ENCODE measurements at regions of chr18 and their contacts with region 1.

Region 1: DNA sequence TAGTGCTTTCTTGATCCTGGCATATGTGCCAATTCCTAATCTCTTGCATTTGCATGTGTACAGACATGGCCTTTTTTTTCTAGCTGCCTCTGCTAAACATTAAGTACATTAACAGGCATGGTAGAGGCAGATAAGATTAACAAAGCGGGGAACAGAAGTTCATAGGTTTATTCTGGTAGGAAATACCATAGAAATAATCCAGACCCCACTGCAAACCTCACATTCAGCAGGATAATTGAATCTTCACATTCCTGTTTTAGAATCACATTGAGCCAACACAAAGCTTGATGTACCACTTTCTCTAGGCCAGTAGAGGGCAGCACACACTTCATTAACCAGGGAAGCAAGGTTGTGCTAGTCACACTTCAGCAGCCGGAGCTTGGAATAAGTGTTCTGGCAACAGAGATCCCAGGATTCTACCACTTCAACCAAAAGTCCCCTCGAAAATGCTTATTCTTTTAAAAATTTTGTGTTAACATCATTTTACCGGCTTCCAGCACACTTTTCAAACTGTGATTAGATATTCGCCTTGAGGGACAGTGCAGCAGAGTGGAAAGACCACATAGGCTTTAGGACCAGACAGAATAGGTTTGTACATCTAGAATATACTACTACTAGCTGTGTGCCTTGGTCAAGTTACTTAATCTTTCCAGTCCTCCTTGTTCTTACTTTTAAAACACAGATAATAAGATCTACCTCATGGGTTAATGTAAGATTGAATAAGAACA is 420.2 kb upstream of the CHST9 start:
- DNase-seq: peak; percentile 57
- H3K4me3 ChIP-seq: no peak overlapping the region
- H3K27ac ChIP-seq: no peak overlapping the region
- H3K4me1 ChIP-seq: no peaks in the 10 kb centered on the region
- CTCF ChIP-seq: peak; percentile 89

Region 2: DNA sequence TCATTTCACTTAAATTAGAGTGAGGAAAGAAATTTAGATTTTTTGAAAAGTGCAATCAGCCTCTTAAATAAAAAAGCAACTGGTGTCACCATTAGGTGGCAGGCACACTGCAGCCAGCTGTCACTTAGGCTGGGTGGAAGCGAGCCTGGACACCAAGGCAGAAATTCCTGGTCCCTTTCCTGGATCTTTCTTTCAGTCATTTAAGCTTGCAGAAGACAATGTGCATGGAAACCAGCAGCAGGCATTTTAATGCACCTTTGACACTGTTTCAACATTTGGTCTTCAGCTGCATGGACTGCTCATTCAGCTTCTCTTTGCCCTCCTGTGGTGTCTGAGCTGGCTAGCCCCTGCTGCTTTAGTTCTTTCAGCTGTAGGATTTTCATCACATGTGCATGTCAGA is 800.8 kb before region 1 on chr18:
- CTCF ChIA-PET with region 1: no interaction called
- POLR2A ChIA-PET with region 1: no interaction called
- intact Hi-C with region 1: loop called (anchors 10 kb)
- DNase-seq: no peak
- H3K4me3 ChIP-seq: no peak overlapping the region
- H3K27ac ChIP-seq: no peak overlapping the region
- H3K4me1 ChIP-seq: no peaks in the 10 kb centered on the region
- CTCF ChIP-seq: peak; percentile 57

Region 3: GRCh38 chr18:27400001-27400400 is 205.3 kb before region 1 on chr18:
- CTCF ChIA-PET with region 1: no interaction called
- POLR2A ChIA-PET with region 1: no interaction called
- intact Hi-C with region 1: no loop called
- DNase-seq: no peak
- H3K4me3 ChIP-seq: no peak overlapping the region
- H3K27ac ChIP-seq: no peak overlapping the region
- H3K4me1 ChIP-seq: no peaks in the 10 kb centered on the region
- CTCF ChIP-seq: peak; percentile 25; the same call in 1 of the 2 replicates

Region 4: GRCh38 chr18:27621236-27621890 is 16.1 kb after region 1 on chr18:
- CTCF ChIA-PET with region 1: no interaction called
- POLR2A ChIA-PET with region 1: no interaction called
- intact Hi-C with region 1: no loop called
- DNase-seq: no peak
- H3K4me3 ChIP-seq: no peak overlapping the region
- H3K27ac ChIP-seq: no peak overlapping the region
- H3K4me1 ChIP-seq: no peaks in the 10 kb centered on the region
- CTCF ChIP-seq: no peak

Region 5: DNA sequence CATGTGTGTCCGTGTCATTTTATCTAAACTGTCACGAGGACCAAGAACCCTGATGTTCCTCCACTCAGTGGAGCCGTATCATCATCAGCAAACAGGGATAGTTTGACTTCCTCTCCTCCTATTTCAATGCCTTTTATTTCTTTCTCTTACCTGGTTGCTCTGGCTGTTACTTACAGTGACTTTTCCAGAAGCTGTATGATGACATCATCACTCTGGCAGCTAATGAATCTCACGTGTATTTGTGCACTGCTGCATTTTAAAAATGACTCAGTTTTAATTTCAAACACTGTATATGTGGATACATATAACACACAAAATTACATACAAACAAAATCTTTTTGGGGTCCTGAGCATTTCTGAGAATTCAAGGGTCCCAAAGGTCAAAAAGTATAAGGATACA is 90.2 kb after region 1 on chr18:
- CTCF ChIA-PET with region 1: no interaction called
- POLR2A ChIA-PET with region 1: no interaction called
- intact Hi-C with region 1: no loop called
- DNase-seq: no peak
- H3K4me3 ChIP-seq: no peak overlapping the region
- H3K27ac ChIP-seq: no peak overlapping the region
- H3K4me1 ChIP-seq: no peaks in the 10 kb centered on the region
- CTCF ChIP-seq: no peak

Region 6: DNA sequence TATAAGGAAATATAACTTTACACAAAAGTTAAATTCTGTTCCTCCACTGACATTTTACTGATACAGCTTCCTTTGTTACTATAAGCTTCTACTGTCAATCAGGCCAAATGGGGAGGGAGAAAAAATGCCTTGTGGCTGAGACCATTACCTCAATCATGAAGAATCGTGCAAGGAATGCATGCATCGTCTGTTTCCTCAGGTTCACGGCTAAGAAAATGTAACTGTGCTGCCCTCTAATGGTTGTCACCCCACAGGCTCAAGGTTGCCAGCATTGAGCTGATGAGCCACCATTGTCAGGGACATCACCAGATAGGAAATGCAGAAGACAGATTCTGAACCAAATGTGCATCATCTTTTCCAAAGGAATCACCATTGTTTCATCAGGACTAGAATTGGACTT is 144.7 kb after region 1 on chr18:
- CTCF ChIA-PET with region 1: no interaction called
- POLR2A ChIA-PET with region 1: no interaction called
- intact Hi-C with region 1: loop called (anchors 10 kb)
- DNase-seq: peak; percentile 9
- H3K4me3 ChIP-seq: no peak overlapping the region
- H3K27ac ChIP-seq: no peak overlapping the region
- H3K4me1 ChIP-seq: no peaks in the 10 kb centered on the region
- CTCF ChIP-seq: peak; percentile 70

Region 7: DNA sequence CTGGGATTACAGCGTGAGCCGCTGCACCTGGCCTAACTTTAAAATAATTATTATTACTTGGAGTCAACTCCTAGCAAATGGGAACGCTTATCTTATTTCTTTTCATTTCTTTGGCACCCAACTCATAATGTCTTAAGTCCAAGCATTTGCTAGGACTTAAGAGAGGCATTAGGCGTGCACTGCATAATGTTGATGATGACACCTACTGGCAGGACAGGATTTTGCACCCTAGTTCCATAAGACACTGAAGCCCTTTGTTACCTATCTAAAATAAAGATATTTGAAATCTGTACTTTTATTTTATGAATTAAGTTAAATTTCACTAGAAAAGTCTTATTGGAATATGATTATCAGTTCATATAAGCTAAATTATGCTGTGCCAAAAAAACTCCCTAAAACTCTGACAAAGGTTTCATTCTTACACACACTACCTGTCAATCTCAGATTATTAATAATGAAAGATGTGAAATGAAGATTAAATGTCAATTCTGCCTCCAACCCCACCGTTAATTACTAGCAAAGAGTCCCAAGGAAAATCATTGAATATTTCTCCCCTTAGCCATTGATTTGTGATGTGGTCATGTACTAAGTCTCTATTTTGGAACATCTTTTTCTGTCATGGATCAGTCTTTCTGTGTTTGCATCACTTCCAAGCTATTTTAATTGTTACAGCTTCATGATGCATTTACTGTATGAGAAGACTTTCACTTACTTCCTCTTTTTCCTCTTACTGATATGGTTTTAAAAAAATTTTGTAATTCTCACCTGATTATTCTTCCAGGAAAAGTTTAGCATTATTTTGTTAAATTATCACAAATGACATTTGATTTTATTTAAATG is 584.3 kb after region 1 on chr18:
- CTCF ChIA-PET with region 1: no interaction called
- POLR2A ChIA-PET with region 1: no interaction called
- intact Hi-C with region 1: loop called (anchors 10 kb)
- DNase-seq: peak; percentile 43
- H3K4me3 ChIP-seq: no peak overlapping the region
- H3K27ac ChIP-seq: no peak overlapping the region
- H3K4me1 ChIP-seq: no peaks in the 10 kb centered on the region
- CTCF ChIP-seq: peak; percentile 82

Measured in OCI-LY7 (cell line).